CD8-positive, alpha-beta T cell (primary cell): ENCODE measurements at regions of chr12 and their contacts with region 1.

Region 1: DNA sequence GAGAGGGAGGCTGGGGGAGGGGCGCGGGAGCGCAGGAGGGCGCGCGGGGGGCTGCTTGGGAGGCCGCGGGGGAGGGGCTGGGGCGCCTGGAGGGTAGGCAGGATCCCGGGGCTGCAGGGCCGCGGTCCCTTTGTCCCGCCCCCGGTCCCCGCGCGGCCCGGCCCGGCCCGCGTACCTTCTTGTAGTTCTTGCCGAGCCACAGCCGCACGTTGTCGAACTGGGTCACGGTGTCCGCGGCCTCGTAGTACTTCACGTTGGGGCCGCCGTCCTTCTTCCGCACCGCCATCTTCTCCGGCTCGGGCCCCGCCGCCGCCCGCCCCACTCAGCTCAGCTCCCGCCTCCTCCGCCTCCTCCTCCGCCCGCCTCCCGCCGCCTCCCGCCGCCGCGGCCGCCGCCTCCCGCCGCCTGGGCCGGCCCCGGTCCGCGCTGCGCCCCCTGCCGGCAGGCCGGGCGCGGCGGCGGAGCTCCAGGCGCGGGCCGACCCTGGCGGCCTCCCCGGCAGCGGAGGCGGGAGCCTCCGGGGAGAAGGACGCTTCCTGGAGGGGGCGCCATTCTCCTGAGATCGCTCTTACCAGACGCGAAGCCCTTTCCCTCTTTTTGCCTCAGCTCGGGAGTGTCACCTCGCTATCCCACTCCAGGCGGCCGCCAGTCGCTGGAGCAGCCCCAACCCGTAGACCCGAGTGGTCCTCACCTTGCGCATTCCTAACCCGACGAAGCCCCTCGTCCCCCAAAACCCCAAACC is at the start of gene SMARCC2:
- DNase-seq: peak; percentile 69 to 94 (median 84)
- ATAC-seq: peak; percentile 82
- H3K4me3 ChIP-seq: peak within 1 kb of the TSS; percentile 65 to 96
- H3K4me3 Mint-ChIP-seq: peak within 1 kb of the TSS; percentile 96
- H3K27ac ChIP-seq: peak within 1 kb of the TSS; percentile 66 to 82
- H3K27ac Mint-ChIP-seq: peak within 1 kb of the TSS; percentile 94
- H3K4me1 ChIP-seq: peaks cover 19% of the 10 kb centered on the region
- H3K4me1 Mint-ChIP-seq: peaks cover 43% of the 10 kb centered on the region
- H3K27me3 ChIP-seq: no peaks in the 10 kb centered on the region
- H3K27me3 Mint-ChIP-seq: no peaks in the 10 kb centered on the region
- CTCF ChIP-seq: peak; percentile 61
- total RNA-seq, gene SMARCC2: 109 to 113 TPM

Region 2: DNA sequence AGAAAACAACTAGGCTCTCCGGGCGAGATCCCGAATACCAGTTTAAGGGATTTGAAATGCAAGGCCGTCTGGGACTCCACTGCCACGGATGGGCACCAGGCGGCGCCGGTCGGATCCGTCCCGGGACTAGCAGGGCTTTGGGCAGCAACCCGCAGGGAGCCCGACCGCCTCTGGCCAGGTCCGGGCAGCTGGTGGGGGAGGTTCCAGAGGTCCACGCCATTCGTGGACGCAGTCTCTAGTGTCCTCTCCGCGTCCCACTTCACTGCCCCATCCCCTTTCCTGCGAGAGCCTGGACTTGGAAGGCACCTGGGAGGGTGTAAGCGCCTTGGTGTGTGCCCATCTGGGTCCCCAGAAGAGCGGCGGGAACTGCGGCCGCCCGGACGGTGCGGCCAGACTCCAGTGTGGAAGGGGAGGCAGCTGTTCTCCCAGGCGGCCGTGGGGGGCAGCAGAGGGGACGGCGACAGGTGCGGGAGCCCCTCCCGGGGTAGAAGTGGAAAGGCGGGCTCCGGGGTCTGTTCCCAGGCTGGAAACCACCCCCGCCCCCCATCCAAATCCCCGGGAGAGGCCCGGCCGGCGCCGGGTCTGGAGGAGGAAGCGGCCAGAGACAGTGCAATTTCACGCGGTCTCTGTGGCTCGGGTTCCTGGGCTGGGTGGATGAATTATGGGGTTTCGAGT is 110.2 kb before region 1 on chr12:
- CTCF ChIA-PET with region 1: interaction called, 4 read pairs
- POLR2A ChIA-PET with region 1: no interaction called
- intact Hi-C with region 1: loop called in 1 of 2 experiments (anchors 1 kb)
- DNase-seq: peak; percentile 10 to 74 (median 52)
- ATAC-seq: peak; percentile 64
- H3K4me3 ChIP-seq: peak overlapping the region; percentile 60 to 72
- H3K4me3 Mint-ChIP-seq: peak overlapping the region; percentile 85
- H3K27ac ChIP-seq: no peak overlapping the region
- H3K27ac Mint-ChIP-seq: no peak overlapping the region
- H3K4me1 ChIP-seq: peaks cover 18% of the 10 kb centered on the region
- H3K4me1 Mint-ChIP-seq: peaks cover 14% of the 10 kb centered on the region
- H3K27me3 ChIP-seq: peaks cover 3 to 12% of the 10 kb centered on the region in 2 experiments
- H3K27me3 Mint-ChIP-seq: peaks cover 2% of the 10 kb centered on the region
- CTCF ChIP-seq: peak; percentile 56

Region 3: DNA sequence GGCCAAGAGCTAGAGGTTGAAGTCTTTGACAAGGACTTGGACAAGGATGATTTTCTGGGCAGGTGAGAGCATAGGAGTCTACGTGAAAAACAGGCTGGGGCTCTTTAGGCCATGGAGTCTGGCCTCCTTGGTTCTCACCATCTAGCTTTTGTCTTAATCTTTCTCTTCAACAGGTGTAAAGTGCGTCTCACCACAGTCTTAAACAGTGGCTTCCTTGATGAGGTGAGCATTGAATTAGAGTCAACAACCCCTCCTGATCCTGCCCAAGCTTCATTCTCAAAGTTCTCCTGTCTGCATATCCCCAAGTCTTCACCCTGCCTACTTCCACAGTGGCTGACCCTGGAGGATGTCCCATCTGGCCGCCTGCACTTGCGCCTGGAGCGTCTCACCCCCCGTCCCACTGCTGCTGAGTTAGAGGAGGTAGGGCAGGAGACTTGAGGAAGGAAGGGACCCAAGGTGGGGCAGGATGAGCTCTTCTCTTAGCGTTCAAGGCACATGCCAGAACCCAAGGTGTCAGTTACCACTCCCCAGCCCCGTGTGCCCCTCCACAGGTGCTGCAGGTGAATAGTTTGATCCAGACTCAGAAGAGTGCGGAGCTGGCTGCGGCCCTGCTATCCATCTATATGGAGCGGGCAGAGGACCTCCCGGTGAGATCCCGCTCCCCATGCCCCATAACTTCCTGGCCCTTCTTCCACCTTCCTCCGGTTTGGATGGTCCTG is 51.3 kb before region 1 on chr12:
- CTCF ChIA-PET with region 1: interaction called, 14 read pairs
- POLR2A ChIA-PET with region 1: interaction called, 6 read pairs
- intact Hi-C with region 1: no loop called
- DNase-seq: peak in 1 of 9 experiments; percentile 34
- ATAC-seq: peak; percentile 63
- H3K4me3 ChIP-seq: no peak overlapping the region
- H3K4me3 Mint-ChIP-seq: peak overlapping the region; percentile 51
- H3K27ac ChIP-seq: peak overlapping the region in 1 of 2 experiments; percentile 51
- H3K27ac Mint-ChIP-seq: peak overlapping the region; percentile 95
- H3K4me1 ChIP-seq: peaks cover 70% of the 10 kb centered on the region
- H3K4me1 Mint-ChIP-seq: peaks cover 60% of the 10 kb centered on the region
- H3K27me3 ChIP-seq: no peaks in the 10 kb centered on the region
- H3K27me3 Mint-ChIP-seq: no peaks in the 10 kb centered on the region
- CTCF ChIP-seq: no peak

Region 4: DNA sequence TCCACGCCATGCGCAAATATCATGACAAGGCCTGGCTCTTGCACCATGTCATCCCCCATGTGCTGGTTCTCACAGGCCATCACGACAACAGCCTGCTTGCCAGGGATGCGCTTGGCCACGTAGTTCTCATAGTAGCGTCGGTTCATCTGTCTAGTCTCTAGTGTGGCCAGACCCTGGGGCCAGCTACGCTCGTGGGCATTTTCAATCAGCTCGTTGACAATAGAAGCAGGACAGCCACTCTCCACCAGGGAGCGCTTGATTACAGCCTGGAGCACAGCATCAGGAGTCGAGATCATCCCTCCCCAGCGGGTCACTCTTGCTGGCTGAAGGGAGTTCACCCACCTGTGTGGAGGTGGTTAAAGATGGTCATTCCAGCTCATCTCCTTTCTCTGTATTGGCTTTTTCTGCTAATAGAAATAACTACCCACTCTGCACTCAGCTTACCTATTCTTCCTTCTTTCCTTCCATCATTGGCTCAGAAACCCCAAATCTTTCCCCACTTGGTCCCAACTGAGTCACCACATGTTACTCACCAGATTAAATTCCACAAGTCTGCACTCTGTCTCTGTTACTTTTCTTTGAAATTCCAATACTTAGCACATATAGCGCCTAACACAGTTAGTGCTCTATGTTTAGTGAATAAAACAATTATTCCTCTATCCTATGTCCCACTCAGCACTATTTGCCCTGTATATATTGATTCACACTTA is 17.3 kb after region 1 on chr12:
- CTCF ChIA-PET with region 1: interaction called, 17 read pairs
- POLR2A ChIA-PET with region 1: interaction called, 3 read pairs
- intact Hi-C with region 1: no loop called
- DNase-seq: peak in 6 of 9 experiments; percentile 31 to 59 (median 48)
- ATAC-seq: peak; percentile 63
- H3K4me3 ChIP-seq: no peak overlapping the region
- H3K4me3 Mint-ChIP-seq: no peak overlapping the region
- H3K27ac ChIP-seq: no peak overlapping the region
- H3K27ac Mint-ChIP-seq: no peak overlapping the region
- H3K4me1 ChIP-seq: no peaks in the 10 kb centered on the region
- H3K4me1 Mint-ChIP-seq: no peaks in the 10 kb centered on the region
- H3K27me3 ChIP-seq: no peaks in the 10 kb centered on the region
- H3K27me3 Mint-ChIP-seq: no peaks in the 10 kb centered on the region
- CTCF ChIP-seq: no peak

Region 5: DNA sequence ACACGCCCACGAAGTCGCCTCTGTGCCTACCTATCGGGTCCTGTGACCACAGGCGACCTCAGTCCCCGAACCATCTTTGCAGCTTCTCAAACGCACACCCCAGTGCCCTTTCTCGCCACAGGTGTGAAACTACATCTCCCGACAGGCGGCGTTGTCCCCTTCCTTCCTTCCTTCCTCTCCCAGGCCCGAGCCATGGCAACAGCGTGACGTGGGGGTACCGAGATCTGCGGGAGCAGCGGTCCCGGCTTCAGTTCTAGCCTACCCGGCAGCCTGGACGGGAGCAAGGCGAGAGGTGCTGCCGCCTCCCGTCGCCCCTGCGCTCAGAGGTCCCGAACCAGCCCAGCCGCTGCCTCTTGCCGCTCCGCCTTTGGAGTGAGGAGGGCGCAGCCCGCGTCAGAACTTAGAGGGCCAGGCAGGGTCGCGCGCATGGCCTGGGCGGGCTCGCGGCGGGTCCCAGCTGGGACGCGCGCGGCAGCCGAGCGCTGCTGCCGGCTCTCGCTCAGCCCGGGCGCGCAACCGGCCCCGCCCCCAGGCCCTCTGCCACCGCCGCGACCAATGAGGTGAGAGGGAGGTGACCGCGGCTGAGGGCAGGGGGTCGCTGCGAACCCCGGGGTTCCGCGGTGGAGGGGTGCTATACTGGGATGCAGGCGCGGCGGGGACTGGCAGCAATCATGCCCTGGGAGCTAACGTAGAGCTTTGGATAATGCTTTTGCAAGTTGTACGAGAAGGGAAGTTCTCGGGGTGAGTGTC is 77.5 kb after region 1 on chr12 and contains the start of gene COQ10A:
- CTCF ChIA-PET with region 1: interaction called, 5 read pairs
- POLR2A ChIA-PET with region 1: no interaction called
- intact Hi-C with region 1: loop called in 1 of 2 experiments (anchors 2 kb)
- DNase-seq: peak; percentile 77 to 95 (median 92)
- ATAC-seq: peak; percentile 87
- H3K4me3 ChIP-seq: peak within 1 kb of the TSS; percentile 87 to 89
- H3K4me3 Mint-ChIP-seq: peak within 1 kb of the TSS; percentile 92
- H3K27ac ChIP-seq: peak within 1 kb of the TSS; percentile 95 to 98
- H3K27ac Mint-ChIP-seq: peak within 1 kb of the TSS; percentile 92
- H3K4me1 ChIP-seq: peaks cover 12% of the 10 kb centered on the region
- H3K4me1 Mint-ChIP-seq: peaks cover 20% of the 10 kb centered on the region
- H3K27me3 ChIP-seq: no peaks in the 10 kb centered on the region
- H3K27me3 Mint-ChIP-seq: no peaks in the 10 kb centered on the region
- CTCF ChIP-seq: peak; percentile 66
- total RNA-seq, gene COQ10A: 29.5 to 38.8 TPM

Region 6: DNA sequence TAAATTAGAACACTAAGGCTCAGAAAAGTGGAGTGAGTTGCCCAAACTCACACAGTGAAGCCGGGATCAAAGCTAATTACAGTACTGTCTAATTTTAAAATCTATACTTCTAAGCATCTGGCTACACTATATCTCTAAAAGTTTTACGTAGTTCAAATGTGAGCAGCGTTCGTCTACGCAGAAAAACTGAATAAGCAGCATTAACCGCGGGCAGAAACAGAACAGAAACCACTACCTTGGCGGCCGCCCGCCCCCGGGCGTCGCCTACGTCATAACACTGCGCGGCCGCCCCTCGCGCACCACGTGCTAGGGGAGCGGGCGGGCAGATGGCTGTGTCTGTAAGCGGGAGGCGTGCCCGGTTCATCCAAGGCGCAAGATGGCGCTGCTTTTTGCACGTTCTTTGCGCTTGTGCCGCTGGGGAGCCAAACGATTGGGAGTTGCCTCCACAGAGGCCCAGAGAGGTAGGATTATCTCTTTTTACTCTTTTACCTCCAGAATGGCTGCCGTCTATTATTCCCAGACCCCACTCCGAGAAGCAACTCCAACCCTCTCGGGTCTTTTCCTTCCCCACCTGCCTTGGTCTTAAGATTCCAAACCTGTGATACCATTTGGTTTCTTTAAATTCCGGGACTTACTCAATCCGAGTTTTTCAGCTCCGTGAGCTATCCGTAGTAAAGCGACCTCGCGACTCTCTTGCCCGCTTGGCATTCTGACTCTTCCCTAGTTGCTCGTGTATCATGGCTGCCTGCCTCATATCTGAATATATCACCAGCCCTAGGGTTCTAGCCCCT is 279.1 kb after region 1 on chr12 and contains the start of gene SPRYD4:
- CTCF ChIA-PET with region 1: interaction called, 23 read pairs
- POLR2A ChIA-PET with region 1: interaction called, 5 read pairs
- intact Hi-C with region 1: loop called (anchors 1 kb)
- DNase-seq: peak; percentile 89 to 97 (median 93)
- ATAC-seq: peak; percentile 90
- H3K4me3 ChIP-seq: peak within 1 kb of the TSS; percentile 72 to 99
- H3K4me3 Mint-ChIP-seq: peak within 1 kb of the TSS; percentile 95
- H3K27ac ChIP-seq: peak within 1 kb of the TSS; percentile 93 to 96
- H3K27ac Mint-ChIP-seq: peak within 1 kb of the TSS; percentile 98
- H3K4me1 ChIP-seq: peaks cover 10% of the 10 kb centered on the region
- H3K4me1 Mint-ChIP-seq: peaks cover 35% of the 10 kb centered on the region
- H3K27me3 ChIP-seq: no peaks in the 10 kb centered on the region
- H3K27me3 Mint-ChIP-seq: no peaks in the 10 kb centered on the region
- CTCF ChIP-seq: no peak
- total RNA-seq, gene SPRYD4: 6.8 to 6.9 TPM